ENCODE measurements at regions of chr3 and their contacts with region 1.

Region 1: GRCh38 chr3:14921078-14921616 is 26.2 kb upstream of the NR2C2 start:
- DNase-seq: peak; percentile 83
- CTCF ChIP-seq: peak; percentile 88

Region 2: GRCh38 chr3:14633819-14634424 is 287.2 kb before region 1 on chr3:
- CTCF ChIA-PET with region 1: interaction called, 19 read pairs
- POLR2A ChIA-PET with region 1: no interaction called
- DNase-seq: peak; percentile 70
- CTCF ChIP-seq: peak; percentile 75

Region 3: GRCh38 chr3:14791343-14791945 is 129.7 kb before region 1 on chr3:
- CTCF ChIA-PET with region 1: interaction called, 59 read pairs
- POLR2A ChIA-PET with region 1: no interaction called
- DNase-seq: peak; percentile 78
- CTCF ChIP-seq: peak; percentile 74

Region 4: DNA sequence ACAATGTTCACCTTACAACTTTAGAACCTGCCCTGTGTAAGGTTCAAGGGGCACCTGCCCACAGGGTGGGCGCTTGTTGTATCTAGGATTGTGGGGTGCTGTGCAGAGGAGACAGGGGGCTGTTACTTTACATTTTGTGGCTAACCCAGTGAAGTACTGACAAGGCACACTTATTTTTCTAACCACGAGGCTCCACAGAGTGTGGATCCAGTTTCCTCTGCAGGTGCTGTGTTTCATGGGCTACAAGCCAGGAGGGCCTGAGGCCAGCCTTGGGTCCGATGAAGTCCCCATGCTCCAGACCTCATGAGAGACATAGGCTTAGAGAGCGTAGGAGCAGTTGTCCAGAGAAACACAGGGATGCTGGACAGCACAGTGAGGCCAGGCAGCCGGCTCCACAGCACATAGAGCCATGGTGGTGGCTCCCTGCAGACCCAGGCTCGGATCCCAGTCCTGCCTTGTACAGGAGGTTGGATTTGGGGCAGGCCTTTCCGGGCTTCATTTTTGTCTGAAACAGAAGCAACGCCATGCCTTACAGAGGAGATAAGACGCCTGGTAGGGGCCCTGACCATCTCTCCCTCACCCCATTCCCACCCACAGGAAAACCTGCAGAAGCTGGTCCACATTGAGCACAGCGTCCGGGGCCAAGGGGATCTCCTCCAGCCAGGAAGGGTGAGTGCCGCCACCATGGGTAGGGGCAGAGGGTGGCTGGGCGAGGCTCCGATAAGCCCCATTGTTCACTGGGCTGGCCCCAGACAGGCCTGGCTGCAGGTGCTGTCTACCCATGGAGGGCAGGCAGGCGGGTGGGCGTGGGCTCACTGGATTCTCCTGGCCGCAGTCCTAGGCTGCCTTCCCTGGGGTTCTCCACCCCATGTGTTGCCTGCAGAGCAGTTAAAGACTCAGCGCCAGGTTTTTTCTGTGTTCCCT is 13.8 kb before region 1 on chr3:
- CTCF ChIA-PET with region 1: interaction called, 23 read pairs
- POLR2A ChIA-PET with region 1: no interaction called
- DNase-seq: no peak
- CTCF ChIP-seq: no peak

Region 5: DNA sequence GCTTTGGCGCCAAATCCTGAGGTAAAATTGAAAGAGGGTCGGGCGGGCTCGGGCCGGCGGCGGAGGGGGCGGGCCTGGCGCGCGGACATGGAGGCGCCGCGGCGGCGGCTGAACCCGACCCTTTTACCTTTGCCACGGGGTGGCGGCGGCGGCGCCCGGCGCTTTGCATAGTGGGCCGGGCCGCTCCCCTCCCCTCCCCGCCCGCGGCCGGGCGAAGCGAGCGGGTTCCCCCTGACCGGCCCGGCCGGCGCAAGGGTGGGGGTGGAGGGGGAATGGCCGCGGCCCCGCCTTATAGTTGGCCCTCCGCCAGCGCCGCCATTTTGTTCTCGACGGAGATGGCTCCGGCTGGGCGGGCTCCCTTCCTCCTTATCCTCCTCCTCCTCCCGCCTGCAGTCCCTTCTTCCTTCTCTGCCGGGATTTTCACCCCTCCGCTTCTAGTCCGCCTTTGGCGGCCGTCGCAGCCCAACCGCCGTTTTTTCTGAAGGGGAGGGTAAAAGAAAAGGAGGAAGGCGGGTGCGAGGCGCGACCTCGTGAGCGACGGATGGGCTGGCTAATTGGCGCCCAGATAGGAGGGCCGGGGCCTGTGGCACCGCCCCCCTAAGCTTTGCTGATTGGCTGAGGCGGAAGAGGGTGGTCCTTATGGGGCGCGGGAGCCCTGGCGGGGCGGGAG is 26.9 kb after region 1 on chr3:
- CTCF ChIA-PET with region 1: interaction called, 10 read pairs
- POLR2A ChIA-PET with region 1: no interaction called
- DNase-seq: peak; percentile 99
- CTCF ChIP-seq: no peak

Measured in GM10248 (cell line).